KBM-7 (cell line): ENCODE measurements at regions of chr9 and their contacts with region 1.

Region 1: DNA sequence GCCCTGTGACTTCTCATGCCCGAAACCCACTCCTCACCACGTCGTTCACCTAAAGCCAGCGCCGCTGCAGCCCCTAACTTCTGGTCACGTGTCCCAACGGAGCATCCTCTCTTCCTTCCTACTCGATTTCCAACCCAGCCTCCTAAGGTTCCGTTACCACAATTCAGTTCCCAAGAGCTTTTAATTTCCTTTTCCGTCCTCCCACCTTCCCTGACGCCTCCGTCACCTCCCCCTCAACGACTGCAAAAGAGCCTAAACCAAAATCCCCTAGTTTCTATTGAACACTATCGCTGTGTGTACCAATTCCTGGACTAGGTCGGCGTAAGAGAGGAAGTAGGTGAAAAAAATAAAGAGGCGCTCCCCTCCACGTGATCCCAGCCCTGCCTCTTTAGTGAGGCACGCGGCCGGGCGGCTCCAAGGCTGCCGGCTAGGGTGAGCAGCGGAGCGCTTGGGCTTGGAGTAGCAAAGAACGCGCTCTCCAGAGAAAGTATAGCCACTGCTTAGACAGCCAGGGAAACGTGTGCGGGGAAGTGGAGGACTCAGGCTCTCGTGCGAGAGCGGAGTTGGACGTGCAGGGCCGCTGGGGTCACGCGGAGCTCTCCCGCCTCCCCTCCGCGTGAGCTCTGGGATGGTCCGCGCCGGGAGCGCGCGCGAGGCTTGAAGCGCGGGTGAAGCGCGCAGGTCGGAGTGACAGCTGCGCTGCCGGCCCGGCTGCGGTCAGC is at the starts of genes CENPP and NOL8:
- DNase-seq: peak; percentile 96

Region 2: GRCh38 chr9:92206488-92206887 is 118.9 kb before region 1 on chr9:
- in situ Hi-C with region 1: loop called (anchors 25 kb)
- DNase-seq: peak; percentile 20

Region 3: GRCh38 chr9:92607773-92608172 is 282.3 kb after region 1 on chr9:
- in situ Hi-C with region 1: loop called (anchors 25 kb)
- DNase-seq: no peak

Region 4: GRCh38 chr9:93343693-93344092 is 1018.3 kb after region 1 on chr9:
- in situ Hi-C with region 1: no loop called
- DNase-seq: no peak